K562 (cell line): ENCODE measurements at regions of chr17 and their contacts with region 1.

Region 1: DNA sequence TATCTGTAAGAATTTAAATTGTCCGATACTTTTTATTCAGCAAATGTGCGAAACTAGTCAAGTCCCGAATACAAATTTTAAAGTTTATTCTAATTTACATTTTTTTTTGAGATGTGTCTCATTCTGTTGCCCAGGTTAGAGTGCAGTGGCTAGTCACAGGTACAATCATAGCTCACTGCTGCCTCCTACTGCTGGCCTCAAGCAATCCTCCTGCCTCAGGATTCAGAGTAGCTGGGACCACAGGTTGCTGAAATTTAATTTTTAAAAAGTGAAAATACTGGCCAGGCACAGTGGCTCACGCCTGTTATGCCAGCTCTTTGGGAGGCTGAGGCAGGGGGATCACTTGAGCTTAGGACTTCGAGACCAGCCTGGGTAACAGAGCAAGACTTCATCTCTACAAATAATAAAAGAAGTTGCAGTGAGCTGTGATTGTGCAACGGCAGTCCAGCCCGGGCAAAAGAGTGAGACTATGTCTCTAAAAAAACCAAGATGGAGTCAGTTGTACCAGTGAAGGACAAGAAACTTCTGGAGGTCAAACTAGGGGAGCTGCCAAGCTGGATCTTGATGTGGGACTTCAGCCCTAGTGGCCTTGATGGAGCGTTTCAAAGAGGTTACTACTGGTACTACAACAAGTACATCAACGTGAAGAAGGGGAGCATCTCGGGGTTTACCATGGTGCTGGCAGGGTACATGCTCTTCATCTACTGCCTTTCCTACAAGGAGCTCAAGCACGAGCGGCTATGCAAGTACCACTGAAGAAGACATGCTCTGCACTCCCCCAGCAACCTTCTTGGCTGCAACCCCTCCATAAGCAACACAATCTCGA is 5.6 kb downstream of the POLG2 start:
- DNase-seq: peak in 1 of 4 experiments; percentile 64
- ATAC-seq: peak; percentile 64
- H3K4me3 ChIP-seq: no peak overlapping the region
- H3K27ac ChIP-seq: no peak overlapping the region
- H3K4me1 ChIP-seq: peaks cover 0 to 4% of the 10 kb centered on the region in 2 experiments; a peak in 1 of 5 replicates
- H3K27me3 ChIP-seq: no peaks in the 10 kb centered on the region
- CTCF ChIP-seq: peak; percentile 54 to 65 (median 62)
- EP300 ChIP-seq: no peak
- POLR2A ChIP-seq: no peak
- RAD21 ChIP-seq: peak; percentile 39 to 64

Region 2: GRCh38 chr17:64306850-64307463 is 184.3 kb before region 1 on chr17:
- CTCF ChIA-PET with region 1: no interaction called
- POLR2A ChIA-PET with region 1: interaction called, 3 read pairs
- in situ Hi-C with region 1: loop called (anchors 5 kb)
- intact Hi-C with region 1: no loop called
- DNase-seq: peak; percentile 67 to 84 (median 69)
- ATAC-seq: peak; percentile 79
- H3K4me3 ChIP-seq: no peak overlapping the region
- H3K27ac ChIP-seq: no peak overlapping the region
- H3K4me1 ChIP-seq: no peaks in the 10 kb centered on the region; a peak in 2 of 5 replicates
- H3K27me3 ChIP-seq: peaks cover 0 to 6% of the 10 kb centered on the region in 2 experiments; a peak in 2 of 5 replicates
- CTCF ChIP-seq: peak; percentile 73 to 85 (median 79)
- EP300 ChIP-seq: no peak
- POLR2A ChIP-seq: no peak
- RAD21 ChIP-seq: peak; percentile 68 to 86

Region 3: DNA sequence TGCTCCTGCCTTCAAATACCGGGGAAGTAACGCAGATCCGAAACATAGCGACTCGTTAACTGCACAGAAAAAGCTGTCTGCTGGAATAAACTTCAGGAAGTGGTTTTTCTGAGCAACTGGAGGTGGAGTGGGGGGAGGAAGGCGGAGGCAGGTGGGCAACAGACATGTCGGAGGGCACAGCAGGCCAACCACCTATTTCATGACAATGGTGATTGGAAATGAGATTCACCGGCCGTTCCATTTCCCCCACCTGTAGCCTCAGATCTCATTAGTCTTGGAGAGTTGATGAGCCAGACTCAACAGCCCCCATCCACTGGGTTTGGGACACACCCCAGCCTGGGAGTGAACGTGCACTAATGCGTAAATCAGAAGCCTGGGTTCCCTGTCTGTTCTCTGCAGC is 92.9 kb before region 1 on chr17:
- CTCF ChIA-PET with region 1: no interaction called
- POLR2A ChIA-PET with region 1: no interaction called
- in situ Hi-C with region 1: no loop called
- intact Hi-C with region 1: no loop called
- DNase-seq: no peak
- ATAC-seq: no peak
- H3K4me3 ChIP-seq: no peak overlapping the region
- H3K27ac ChIP-seq: no peak overlapping the region
- H3K4me1 ChIP-seq: peaks cover 0 to 5% of the 10 kb centered on the region in 2 experiments; a peak in 2 of 5 replicates
- H3K27me3 ChIP-seq: no peaks in the 10 kb centered on the region
- CTCF ChIP-seq: no peak
- EP300 ChIP-seq: no peak
- POLR2A ChIP-seq: no peak
- RAD21 ChIP-seq: no peak